ENCODE measurements at regions of chr2 and their contacts with region 1.

Region 1: GRCh38 chr2:169933124-169933711 is 106.0 kb downstream of the UBR3 start:
- DNase-seq: peak in 2 of 3 donors; percentile 10 to 12
- H3K4me3 ChIP-seq: no peak overlapping the region
- H3K4me3 Mint-ChIP-seq: no peak overlapping the region
- H3K27ac ChIP-seq: no peak overlapping the region
- H3K27ac Mint-ChIP-seq: no peak overlapping the region
- H3K4me1 ChIP-seq: no peaks in the 10 kb centered on the region
- H3K4me1 Mint-ChIP-seq: no peaks in the 10 kb centered on the region
- H3K27me3 ChIP-seq: no peaks in the 10 kb centered on the region
- H3K27me3 Mint-ChIP-seq: no peaks in the 10 kb centered on the region
- CTCF ChIP-seq: peak; percentile 77

Region 2: DNA sequence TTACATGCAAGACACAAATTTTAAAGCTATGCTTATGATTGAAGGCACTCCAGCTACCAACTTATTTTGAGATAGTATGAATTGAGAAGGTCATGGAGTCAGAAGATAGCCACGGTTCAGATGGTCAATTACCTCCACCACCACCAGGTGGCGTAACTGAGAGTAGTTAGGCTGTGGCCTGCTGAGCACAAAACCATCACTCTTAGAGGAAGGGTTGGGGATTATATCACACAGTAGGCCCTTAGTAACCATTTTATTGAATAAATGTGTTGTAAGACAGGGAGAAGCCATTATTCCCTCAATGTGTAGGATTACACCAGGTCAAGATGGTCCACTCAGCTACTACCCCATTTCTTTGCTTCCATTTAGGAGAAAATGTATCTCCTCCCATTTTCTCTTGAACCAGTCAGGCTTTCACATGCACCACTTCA is 404.9 kb before region 1 on chr2:
- intact Hi-C with region 1: loop called (anchors 10 kb)
- DNase-seq: peak; percentile 44 to 67 (median 55)
- H3K4me3 ChIP-seq: no peak overlapping the region
- H3K4me3 Mint-ChIP-seq: no peak overlapping the region
- H3K27ac ChIP-seq: no peak overlapping the region
- H3K27ac Mint-ChIP-seq: no peak overlapping the region
- H3K4me1 ChIP-seq: no peaks in the 10 kb centered on the region
- H3K4me1 Mint-ChIP-seq: no peaks in the 10 kb centered on the region
- H3K27me3 ChIP-seq: no peaks in the 10 kb centered on the region
- H3K27me3 Mint-ChIP-seq: no peaks in the 10 kb centered on the region
- CTCF ChIP-seq: peak; percentile 90

Measured in CD14-positive monocyte (primary cell).